Activated naive CD4-positive, alpha-beta T cell treated with anti-CD3 and anti-CD28 coated beads for 36 hours (primary cell): ENCODE measurements at regions of chr9 and their contacts with region 1.

Region 1: DNA sequence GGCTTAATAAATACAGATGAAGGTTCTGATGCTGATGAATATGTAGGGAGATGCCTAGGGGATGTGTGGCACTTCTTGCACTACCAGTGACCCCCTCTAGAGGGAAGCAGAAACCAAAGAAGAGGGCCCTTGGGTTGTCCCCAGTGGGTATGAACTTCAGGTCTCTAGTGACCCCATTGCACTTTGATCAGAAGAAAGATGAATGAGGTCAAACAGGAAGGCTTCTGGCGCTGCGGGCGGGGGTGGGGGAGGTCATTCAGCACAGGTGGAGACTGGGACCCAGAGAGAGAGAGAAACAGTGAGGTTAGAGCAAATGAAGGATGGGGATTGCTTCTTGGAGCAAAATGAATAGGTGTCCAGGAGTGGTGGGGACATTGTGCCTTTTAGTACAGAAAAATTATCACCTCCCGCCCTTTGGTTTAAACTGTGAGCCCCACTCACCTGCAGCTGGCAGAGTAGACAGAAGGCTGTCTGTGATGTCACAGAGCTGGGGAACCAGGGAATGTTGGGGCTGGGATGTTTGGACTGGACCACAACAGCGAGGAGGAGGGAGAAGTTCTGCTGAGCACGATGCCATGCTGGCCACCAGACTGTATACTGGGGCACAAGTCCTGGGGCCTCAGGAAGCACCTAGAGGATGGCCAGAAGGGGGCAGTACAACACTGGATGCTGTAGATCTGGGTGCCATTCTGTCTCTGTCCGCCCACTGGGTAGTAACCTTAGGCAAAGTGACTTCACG is at the start of gene TEX48:
- DNase-seq: peak; percentile 92
- H3K4me3 Mint-ChIP-seq: no peak within 1 kb of the TSS
- H3K27ac Mint-ChIP-seq: peak within 1 kb of the TSS; percentile 64
- H3K4me1 Mint-ChIP-seq: peaks cover 39% of the 10 kb centered on the region
- H3K27me3 Mint-ChIP-seq: peaks cover 4% of the 10 kb centered on the region
- total RNA-seq, gene TEX48: not detected

Region 2: GRCh38 chr9:114405294-114406034 is 276.3 kb before region 1 on chr9:
- CTCF ChIA-PET with region 1: interaction called, 10 read pairs
- intact Hi-C with region 1: loop called (anchors 1 kb)
- DNase-seq: peak; percentile 91
- H3K4me3 Mint-ChIP-seq: no peak overlapping the region
- H3K27ac Mint-ChIP-seq: peak overlapping the region; percentile 48
- H3K4me1 Mint-ChIP-seq: peaks cover 5% of the 10 kb centered on the region
- H3K27me3 Mint-ChIP-seq: no peaks in the 10 kb centered on the region

Region 3: GRCh38 chr9:114671605-114672004 is 10.2 kb before region 1 on chr9:
- CTCF ChIA-PET with region 1: interaction called, 11 read pairs
- intact Hi-C with region 1: no loop called
- DNase-seq: no peak
- H3K4me3 Mint-ChIP-seq: no peak overlapping the region
- H3K27ac Mint-ChIP-seq: no peak overlapping the region
- H3K4me1 Mint-ChIP-seq: peaks cover 19% of the 10 kb centered on the region
- H3K27me3 Mint-ChIP-seq: peaks cover 3% of the 10 kb centered on the region

Region 4: GRCh38 chr9:114718801-114719221 is 37.0 kb after region 1 on chr9:
- CTCF ChIA-PET with region 1: interaction called, 19 read pairs
- intact Hi-C with region 1: loop called (anchors 5 kb)
- DNase-seq: peak; percentile 97
- H3K4me3 Mint-ChIP-seq: peak overlapping the region; percentile 22
- H3K27ac Mint-ChIP-seq: peak overlapping the region; percentile 81
- H3K4me1 Mint-ChIP-seq: peaks cover 49% of the 10 kb centered on the region
- H3K27me3 Mint-ChIP-seq: peaks cover 5% of the 10 kb centered on the region

Region 5: GRCh38 chr9:114746601-114747346 is 65.0 kb after region 1 on chr9:
- CTCF ChIA-PET with region 1: interaction called, 10 read pairs
- intact Hi-C with region 1: no loop called
- DNase-seq: no peak
- H3K4me3 Mint-ChIP-seq: no peak overlapping the region
- H3K27ac Mint-ChIP-seq: no peak overlapping the region
- H3K4me1 Mint-ChIP-seq: peaks cover 22% of the 10 kb centered on the region
- H3K27me3 Mint-ChIP-seq: no peaks in the 10 kb centered on the region

Region 6: DNA sequence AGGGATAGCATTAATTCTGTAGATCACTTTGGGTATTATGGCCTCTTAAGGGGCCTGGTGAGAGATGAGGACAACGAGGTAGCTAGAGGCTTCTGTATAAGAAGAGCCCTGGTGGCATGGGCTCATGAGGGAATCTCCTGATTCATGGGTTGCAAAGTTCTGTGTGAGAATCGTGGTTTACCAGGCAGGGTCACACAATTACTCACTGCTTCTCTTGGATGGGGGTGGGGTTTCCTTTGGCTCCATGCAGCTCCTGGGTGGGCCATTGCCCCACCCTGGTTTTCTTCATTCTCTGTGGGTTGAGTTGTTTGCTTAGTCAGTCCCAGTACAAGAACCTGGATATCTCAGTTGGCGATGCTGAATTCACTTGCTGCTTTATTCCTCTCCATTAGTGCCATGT is 155.0 kb after region 1 on chr9:
- CTCF ChIA-PET with region 1: no interaction called
- intact Hi-C with region 1: no loop called
- DNase-seq: peak; percentile 37
- H3K4me3 Mint-ChIP-seq: no peak overlapping the region
- H3K27ac Mint-ChIP-seq: no peak overlapping the region
- H3K4me1 Mint-ChIP-seq: peaks cover 8% of the 10 kb centered on the region
- H3K27me3 Mint-ChIP-seq: no peaks in the 10 kb centered on the region

Region 7: GRCh38 chr9:114930056-114930812 is 248.5 kb after region 1 on chr9 and contains the start of gene TNFSF8:
- CTCF ChIA-PET with region 1: interaction called, 30 read pairs
- intact Hi-C with region 1: no loop called
- DNase-seq: peak; percentile 90
- H3K4me3 Mint-ChIP-seq: peak within 1 kb of the TSS; percentile 94
- H3K27ac Mint-ChIP-seq: peak within 1 kb of the TSS; percentile 97
- H3K4me1 Mint-ChIP-seq: peaks cover 38% of the 10 kb centered on the region
- H3K27me3 Mint-ChIP-seq: no peaks in the 10 kb centered on the region
- total RNA-seq, gene TNFSF8: 25.9 to 26.4 TPM

Region 8: DNA sequence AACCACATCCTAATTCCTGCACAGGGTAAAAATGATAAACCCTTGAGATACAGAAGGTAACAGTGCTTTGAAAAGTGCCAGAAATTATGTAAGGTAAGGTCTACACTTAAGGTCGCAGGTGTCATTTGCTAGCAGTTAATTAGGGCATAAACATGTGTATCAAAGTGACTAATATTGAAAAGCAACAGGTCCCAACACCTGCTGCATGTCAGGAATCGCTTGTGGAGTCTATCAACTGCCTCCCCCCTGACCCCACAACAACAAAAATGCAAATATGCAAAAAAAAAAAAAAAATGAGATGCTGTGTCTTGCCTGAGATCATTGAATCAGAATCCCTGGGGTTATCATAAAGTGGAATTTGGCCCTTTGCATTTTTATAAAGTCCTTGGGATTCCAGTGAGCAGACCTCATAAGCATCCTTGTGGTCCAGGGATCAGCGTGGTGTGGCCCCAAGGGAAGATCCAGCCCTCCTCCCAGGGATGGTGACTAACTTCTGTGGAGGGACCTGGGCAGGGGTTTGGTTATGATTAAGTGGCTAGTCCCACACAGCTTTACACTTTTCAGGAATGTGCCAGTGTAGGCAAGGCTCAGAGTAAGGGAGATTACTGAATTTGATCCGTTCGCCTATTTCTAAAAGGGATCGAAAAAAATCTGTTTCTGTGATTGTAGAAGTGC is 341.1 kb after region 1 on chr9:
- CTCF ChIA-PET with region 1: interaction called, 16 read pairs
- intact Hi-C with region 1: no loop called
- DNase-seq: no peak
- H3K4me3 Mint-ChIP-seq: no peak overlapping the region
- H3K27ac Mint-ChIP-seq: no peak overlapping the region
- H3K4me1 Mint-ChIP-seq: no peaks in the 10 kb centered on the region
- H3K27me3 Mint-ChIP-seq: no peaks in the 10 kb centered on the region

Region 9: GRCh38 chr9:115289757-115290208 is 608.0 kb after region 1 on chr9:
- CTCF ChIA-PET with region 1: no interaction called
- intact Hi-C with region 1: no loop called
- DNase-seq: no peak
- H3K4me3 Mint-ChIP-seq: no peak overlapping the region
- H3K27ac Mint-ChIP-seq: no peak overlapping the region
- H3K4me1 Mint-ChIP-seq: no peaks in the 10 kb centered on the region
- H3K27me3 Mint-ChIP-seq: peaks cover 11% of the 10 kb centered on the region